Motor neuron (in vitro differentiated cells): ENCODE measurements at regions of chr18 and their contacts with region 1.

Region 1: DNA sequence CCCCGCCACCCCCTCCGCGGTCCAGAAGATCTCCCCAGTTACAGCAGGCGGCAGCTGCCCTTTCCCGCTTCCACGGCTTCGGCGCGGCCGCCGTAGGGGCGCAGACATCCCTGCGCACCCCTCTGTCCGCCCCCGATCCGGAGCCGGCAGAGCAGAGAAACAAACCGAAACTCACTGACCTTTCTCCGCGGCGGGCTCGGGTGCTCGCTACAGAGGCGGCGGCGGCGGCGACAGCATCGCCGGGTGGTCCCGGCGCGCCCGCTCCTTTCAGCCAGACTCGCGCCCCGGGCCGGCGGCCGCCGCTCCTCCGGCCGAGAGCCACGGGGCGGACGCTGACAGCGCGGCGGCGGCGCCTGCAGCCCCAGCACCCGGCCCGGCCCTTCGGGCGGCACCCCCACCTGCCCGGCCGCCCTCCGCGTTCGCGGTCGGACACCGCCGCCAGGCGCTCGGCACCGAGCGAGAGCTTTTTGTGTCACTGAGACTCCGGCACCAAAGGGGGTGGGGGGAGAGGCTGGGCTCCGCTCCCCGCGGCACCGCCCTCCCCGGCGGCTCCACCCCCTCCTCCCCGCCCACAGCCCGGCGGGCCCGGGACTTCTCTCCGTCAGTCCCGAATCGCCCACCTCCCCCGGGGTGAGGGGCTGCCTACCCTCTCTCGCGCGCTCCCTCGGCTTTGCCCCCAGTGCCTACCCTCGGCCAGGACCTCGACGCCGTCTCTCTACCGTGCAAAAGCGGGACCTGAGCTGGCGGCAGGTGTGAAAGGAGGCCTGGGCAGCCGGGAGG is 1.4 kb upstream of the RNF152 start:
- ATAC-seq: peak; percentile 62 to 80 (median 70)
- H3K4me3 ChIP-seq: peak overlapping the region; percentile 57 to 87 (median 79)
- H3K27ac ChIP-seq: peak overlapping the region; percentile 77 to 86
- H3K4me1 ChIP-seq: peaks cover 8 to 10% of the 10 kb centered on the region in 2 donors

Region 2: DNA sequence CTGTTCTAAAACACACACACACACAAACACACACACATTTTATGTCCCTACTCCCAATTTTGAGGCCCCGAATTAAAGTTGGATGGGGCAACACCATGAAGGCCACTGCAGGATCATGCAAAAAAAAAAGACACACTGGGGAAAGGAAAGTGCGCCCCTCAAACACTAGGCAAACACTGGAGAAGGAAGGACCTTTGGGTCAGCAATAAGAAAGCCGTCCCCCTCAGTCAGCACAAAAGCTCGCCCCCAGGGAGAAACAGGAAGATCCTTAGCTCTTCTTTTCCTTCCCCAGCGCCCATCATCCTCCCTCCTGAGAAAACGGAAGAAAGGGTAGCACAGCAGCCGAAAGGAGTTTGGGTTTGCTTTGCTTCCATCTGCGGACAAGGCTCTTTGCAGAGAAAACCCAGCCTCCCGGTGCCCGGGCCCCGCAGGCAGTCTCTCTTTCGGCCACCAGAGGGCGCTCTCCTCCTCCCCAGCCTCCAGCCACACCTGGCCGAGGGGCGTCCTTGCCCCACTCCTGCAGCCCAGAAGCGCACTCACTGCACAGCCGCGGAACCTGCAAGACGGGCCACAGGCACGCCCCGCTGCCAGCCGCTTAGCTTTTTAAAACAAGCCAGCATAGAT is 312.5 kb before region 1 on chr18:
- in situ Hi-C with region 1: loop called in 1 of 9 experiments (anchors 25 kb)
- ATAC-seq: peak; percentile 91 to 100 (median 100)
- H3K4me3 ChIP-seq: peak overlapping the region; percentile 10 to 24 (median 21)
- H3K27ac ChIP-seq: no peak overlapping the region
- H3K4me1 ChIP-seq: peaks cover 0 to 2% of the 10 kb centered on the region in 2 donors

Region 3: GRCh38 chr18:61635901-61636528 is 258.1 kb before region 1 on chr18:
- in situ Hi-C with region 1: loop called in 3 of 9 experiments (anchors 25 kb)
- ATAC-seq: peak; percentile 77 to 98 (median 92)
- H3K4me3 ChIP-seq: no peak overlapping the region
- H3K27ac ChIP-seq: no peak overlapping the region
- H3K4me1 ChIP-seq: peaks cover 4 to 6% of the 10 kb centered on the region in 2 donors

Region 4: GRCh38 chr18:61679836-61680235 is 214.3 kb before region 1 on chr18:
- in situ Hi-C with region 1: no loop called
- ATAC-seq: no peak
- H3K4me3 ChIP-seq: no peak overlapping the region
- H3K27ac ChIP-seq: no peak overlapping the region
- H3K4me1 ChIP-seq: no peaks in the 10 kb centered on the region

Region 5: DNA sequence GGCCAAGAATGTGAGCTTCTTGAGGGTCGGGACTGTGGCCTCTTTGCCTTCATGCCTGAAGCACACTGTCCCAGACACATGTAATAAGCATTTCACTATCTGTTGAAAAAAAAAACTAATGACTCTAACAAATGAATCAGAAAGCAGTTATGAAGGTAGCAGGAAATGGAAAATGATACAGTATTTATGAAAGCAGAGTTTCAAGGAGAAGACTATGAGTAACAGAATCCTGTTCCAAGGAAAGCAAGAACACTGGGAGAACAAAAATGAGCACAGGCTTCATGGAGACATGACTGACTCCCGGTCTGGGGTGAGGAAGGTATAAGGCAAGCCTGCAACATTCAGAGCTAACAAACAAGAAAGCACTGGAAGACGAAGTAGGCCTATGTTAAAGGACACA is 192.2 kb before region 1 on chr18:
- in situ Hi-C with region 1: no loop called
- ATAC-seq: no peak
- H3K4me3 ChIP-seq: no peak overlapping the region
- H3K27ac ChIP-seq: no peak overlapping the region
- H3K4me1 ChIP-seq: no peaks in the 10 kb centered on the region

Region 6: GRCh38 chr18:61797696-61798590 is 96.2 kb before region 1 on chr18:
- in situ Hi-C with region 1: loop called in 1 of 9 experiments (anchors 25 kb)
- ATAC-seq: no peak
- H3K4me3 ChIP-seq: no peak overlapping the region
- H3K27ac ChIP-seq: no peak overlapping the region
- H3K4me1 ChIP-seq: peaks cover 12 to 21% of the 10 kb centered on the region in 2 donors